Activated CD8-positive, alpha-beta T cell treated with anti-CD3 and anti-CD28 coated beads for 36 hours (primary cell): ENCODE measurements at regions of chr19 and their contacts with region 1.

Region 1: GRCh38 chr19:12983542-12984142 is 11.6 kb upstream of the NFIX start:
- DNase-seq: peak; percentile 85
- ATAC-seq: peak; percentile 89
- H3K4me3 Mint-ChIP-seq: no peak overlapping the region
- H3K27ac Mint-ChIP-seq: no peak overlapping the region
- H3K4me1 Mint-ChIP-seq: peaks cover 2% of the 10 kb centered on the region
- H3K27me3 Mint-ChIP-seq: peaks cover 4% of the 10 kb centered on the region
- CTCF ChIP-seq: peak; percentile 97

Region 2: DNA sequence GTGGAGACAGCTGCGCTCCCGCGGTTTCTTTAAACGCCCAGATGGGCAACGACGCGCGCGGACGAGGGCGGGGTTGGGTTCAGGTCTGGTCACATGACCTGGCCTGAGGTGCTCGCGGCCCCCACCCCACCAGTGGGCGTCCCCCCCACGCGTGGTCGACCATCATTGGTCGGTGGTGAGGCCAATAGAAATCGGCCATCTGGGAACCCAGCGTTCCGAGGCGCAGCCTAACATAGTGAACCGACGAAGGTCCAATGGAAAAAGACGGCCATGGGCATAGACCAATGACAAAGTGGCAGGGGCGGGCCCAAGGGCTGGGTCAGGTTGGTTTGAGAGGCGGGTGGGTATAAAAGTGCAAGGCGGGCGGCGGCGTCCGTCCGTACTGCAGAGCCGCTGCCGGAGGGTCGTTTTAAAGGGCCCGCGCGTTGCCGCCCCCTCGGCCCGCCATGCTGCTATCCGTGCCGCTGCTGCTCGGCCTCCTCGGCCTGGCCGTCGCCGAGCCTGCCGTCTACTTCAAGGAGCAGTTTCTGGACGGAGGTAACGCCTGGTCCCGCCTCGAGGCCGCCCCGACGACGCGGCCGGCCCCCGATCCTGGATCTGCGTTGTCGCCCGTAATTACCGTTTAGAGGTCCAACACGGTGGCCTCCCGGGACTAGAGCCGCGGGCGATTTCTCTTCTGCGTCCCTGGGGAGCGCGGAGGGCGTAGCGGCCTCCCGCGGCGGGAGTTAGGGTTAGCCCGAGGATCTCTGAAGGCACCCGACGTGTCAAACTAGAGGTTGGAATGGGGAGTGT is 45.2 kb before region 1 on chr19 and contains the start of gene CALR:
- CTCF ChIA-PET with region 1: no interaction called
- POLR2A ChIA-PET with region 1: no interaction called
- intact Hi-C with region 1: no loop called
- DNase-seq: peak; percentile 100
- ATAC-seq: peak; percentile 87
- H3K4me3 Mint-ChIP-seq: peak within 1 kb of the TSS; percentile 99
- H3K27ac Mint-ChIP-seq: peak within 1 kb of the TSS; percentile 95
- H3K4me1 Mint-ChIP-seq: peaks cover 49% of the 10 kb centered on the region
- H3K27me3 Mint-ChIP-seq: no peaks in the 10 kb centered on the region
- CTCF ChIP-seq: no peak
- total RNA-seq, gene CALR: 535 to 563 TPM

Region 3: GRCh38 chr19:13012690-13013608 is 29.3 kb after region 1 on chr19:
- CTCF ChIA-PET with region 1: interaction called, 12 read pairs
- POLR2A ChIA-PET with region 1: interaction called, 3 read pairs
- intact Hi-C with region 1: no loop called
- DNase-seq: peak; percentile 70
- ATAC-seq: peak; percentile 62
- H3K4me3 Mint-ChIP-seq: peak overlapping the region; percentile 77
- H3K27ac Mint-ChIP-seq: peak overlapping the region; percentile 75
- H3K4me1 Mint-ChIP-seq: peaks cover 19% of the 10 kb centered on the region
- H3K27me3 Mint-ChIP-seq: peaks cover 59% of the 10 kb centered on the region
- CTCF ChIP-seq: no peak

Region 4: DNA sequence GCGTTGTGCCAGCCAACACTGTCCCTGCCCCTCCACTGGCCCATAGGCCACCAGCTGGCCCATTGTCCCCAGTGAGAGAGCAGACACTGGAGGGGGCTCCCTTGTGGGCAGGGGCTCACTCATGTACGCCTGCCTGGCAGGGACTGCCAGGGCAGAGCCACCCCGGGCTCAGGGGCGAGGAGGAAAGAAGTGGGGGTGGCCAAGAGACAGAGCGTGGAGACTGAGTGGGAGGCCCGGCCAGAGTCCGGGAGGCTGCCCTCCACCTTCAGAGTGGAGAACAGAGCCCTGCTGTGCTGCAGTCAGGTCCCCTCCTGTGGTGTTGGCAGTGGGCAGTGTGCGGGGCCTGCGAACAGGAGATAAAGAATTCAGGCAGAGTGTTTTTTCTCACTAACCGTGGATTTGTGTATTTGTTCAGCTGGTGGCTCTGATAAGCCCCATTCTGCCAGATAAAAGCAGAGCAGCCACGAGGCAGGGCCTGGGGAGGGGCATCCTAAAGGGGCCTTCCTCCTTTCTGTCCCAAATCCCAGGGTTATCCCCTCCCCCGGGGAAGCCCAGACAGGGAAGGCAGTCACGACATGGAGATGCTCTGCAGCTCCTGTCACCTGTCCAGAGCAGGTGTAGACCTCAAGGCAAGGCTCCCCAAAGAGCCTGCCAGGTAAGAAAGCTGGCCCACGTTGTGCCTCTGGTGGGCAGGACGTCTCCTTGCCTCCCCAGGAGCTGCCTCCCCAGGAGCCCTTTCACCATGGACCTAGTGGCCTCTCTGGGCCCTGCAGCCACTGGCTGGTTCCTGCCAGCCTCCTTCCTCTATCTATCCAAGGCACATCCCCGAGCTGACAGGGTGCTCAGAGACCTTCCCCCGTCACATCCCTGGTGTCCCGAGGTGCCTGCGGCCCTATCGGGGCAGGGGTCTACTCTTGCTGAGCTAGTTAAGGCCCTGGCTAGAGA is 86.0 kb after region 1 on chr19:
- CTCF ChIA-PET with region 1: interaction called, 11 read pairs
- POLR2A ChIA-PET with region 1: no interaction called
- intact Hi-C with region 1: loop called (anchors 5 kb)
- DNase-seq: no peak
- ATAC-seq: no peak
- H3K4me3 Mint-ChIP-seq: no peak overlapping the region
- H3K27ac Mint-ChIP-seq: no peak overlapping the region
- H3K4me1 Mint-ChIP-seq: no peaks in the 10 kb centered on the region
- H3K27me3 Mint-ChIP-seq: no peaks in the 10 kb centered on the region
- CTCF ChIP-seq: no peak

Region 5: DNA sequence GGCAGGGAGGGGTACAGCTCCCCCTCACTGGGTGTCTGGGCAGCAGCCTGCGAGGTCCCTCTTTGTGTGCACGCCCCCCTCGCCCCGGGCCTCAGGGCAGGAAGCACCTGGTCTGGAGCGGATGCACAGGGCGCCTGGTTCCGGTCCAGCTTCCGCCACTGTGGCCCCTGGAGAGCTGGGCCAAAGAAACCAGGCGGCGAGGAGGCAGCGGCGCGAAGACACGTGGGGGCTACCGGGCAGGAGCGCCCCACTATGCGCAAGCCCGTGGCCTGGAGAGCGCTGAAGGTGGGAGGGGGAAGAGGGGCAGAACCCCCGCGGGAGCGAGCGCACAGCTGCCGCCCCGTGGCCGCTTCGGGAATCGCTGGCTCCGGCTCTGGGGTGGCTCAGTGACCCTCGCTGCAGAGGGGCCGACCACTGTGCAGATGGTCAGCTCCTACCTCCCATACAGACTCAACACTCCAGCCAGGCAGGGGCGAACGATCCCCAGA is 120.8 kb after region 1 on chr19:
- CTCF ChIA-PET with region 1: interaction called, 22 read pairs
- POLR2A ChIA-PET with region 1: no interaction called
- intact Hi-C with region 1: no loop called
- DNase-seq: peak; percentile 74
- ATAC-seq: peak; percentile 63
- H3K4me3 Mint-ChIP-seq: peak overlapping the region; percentile 80
- H3K27ac Mint-ChIP-seq: peak overlapping the region; percentile 86
- H3K4me1 Mint-ChIP-seq: peaks cover 28% of the 10 kb centered on the region
- H3K27me3 Mint-ChIP-seq: no peaks in the 10 kb centered on the region
- CTCF ChIP-seq: peak; percentile 98